ENCODE measurements at regions of chr15 and their contacts with region 1.

Region 1: DNA sequence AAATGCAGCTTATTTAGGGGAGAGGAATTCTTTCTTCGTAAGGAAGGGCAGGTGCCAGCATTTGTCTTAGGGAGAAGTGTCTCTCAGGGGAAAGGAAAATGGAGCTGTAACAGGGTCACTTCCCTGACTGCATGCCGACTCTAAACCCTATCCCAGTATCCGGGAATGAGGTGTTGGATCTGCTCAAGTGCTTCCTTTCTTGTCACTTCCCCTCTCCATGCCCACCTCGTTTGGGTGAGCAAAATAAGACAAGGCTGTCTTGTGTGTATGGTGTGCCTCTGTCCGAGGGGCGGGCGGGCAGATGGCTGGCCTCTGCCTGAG is 230.1 kb upstream of the TPM1 start:
- DNase-seq: no peak
- H3K4me3 ChIP-seq: no peak overlapping the region
- H3K4me3 Mint-ChIP-seq: peak overlapping the region; percentile 27
- H3K27ac Mint-ChIP-seq: peak overlapping the region; percentile 55
- H3K4me1 ChIP-seq: peaks cover 49% of the 10 kb centered on the region
- H3K4me1 Mint-ChIP-seq: peaks cover 23% of the 10 kb centered on the region
- H3K27me3 ChIP-seq: no peaks in the 10 kb centered on the region
- H3K27me3 Mint-ChIP-seq: no peaks in the 10 kb centered on the region
- CTCF ChIP-seq: no peak

Region 2: GRCh38 chr15:62711691-62712454 is 100.6 kb before region 1 on chr15:
- CTCF ChIA-PET with region 1: no interaction called
- POLR2A ChIA-PET with region 1: no interaction called
- intact Hi-C with region 1: no loop called
- DNase-seq: no peak
- H3K4me3 ChIP-seq: no peak overlapping the region
- H3K4me3 Mint-ChIP-seq: no peak overlapping the region
- H3K27ac Mint-ChIP-seq: no peak overlapping the region
- H3K4me1 ChIP-seq: no peaks in the 10 kb centered on the region
- H3K4me1 Mint-ChIP-seq: no peaks in the 10 kb centered on the region
- H3K27me3 ChIP-seq: no peaks in the 10 kb centered on the region
- H3K27me3 Mint-ChIP-seq: no peaks in the 10 kb centered on the region
- CTCF ChIP-seq: no peak

Region 3: GRCh38 chr15:62833646-62834045 is 21.2 kb after region 1 on chr15:
- CTCF ChIA-PET with region 1: no interaction called
- POLR2A ChIA-PET with region 1: interaction called, 5 read pairs
- intact Hi-C with region 1: loop called (anchors 1 kb)
- DNase-seq: no peak
- H3K4me3 ChIP-seq: no peak overlapping the region
- H3K4me3 Mint-ChIP-seq: no peak overlapping the region
- H3K27ac Mint-ChIP-seq: no peak overlapping the region
- H3K4me1 ChIP-seq: peaks cover 13% of the 10 kb centered on the region
- H3K4me1 Mint-ChIP-seq: peaks cover 13% of the 10 kb centered on the region
- H3K27me3 ChIP-seq: no peaks in the 10 kb centered on the region
- H3K27me3 Mint-ChIP-seq: no peaks in the 10 kb centered on the region
- CTCF ChIP-seq: no peak

Region 4: GRCh38 chr15:62857411-62857853 is 45.0 kb after region 1 on chr15:
- CTCF ChIA-PET with region 1: no interaction called
- POLR2A ChIA-PET with region 1: no interaction called
- intact Hi-C with region 1: no loop called
- DNase-seq: no peak
- H3K4me3 ChIP-seq: no peak overlapping the region
- H3K4me3 Mint-ChIP-seq: no peak overlapping the region
- H3K27ac Mint-ChIP-seq: no peak overlapping the region
- H3K4me1 ChIP-seq: peaks cover 11% of the 10 kb centered on the region; the same call in 1 of the 2 replicates
- H3K4me1 Mint-ChIP-seq: no peaks in the 10 kb centered on the region
- H3K27me3 ChIP-seq: no peaks in the 10 kb centered on the region
- H3K27me3 Mint-ChIP-seq: no peaks in the 10 kb centered on the region
- CTCF ChIP-seq: no peak